ENCODE measurements at regions of chr19 and their contacts with region 1.

Region 1: DNA sequence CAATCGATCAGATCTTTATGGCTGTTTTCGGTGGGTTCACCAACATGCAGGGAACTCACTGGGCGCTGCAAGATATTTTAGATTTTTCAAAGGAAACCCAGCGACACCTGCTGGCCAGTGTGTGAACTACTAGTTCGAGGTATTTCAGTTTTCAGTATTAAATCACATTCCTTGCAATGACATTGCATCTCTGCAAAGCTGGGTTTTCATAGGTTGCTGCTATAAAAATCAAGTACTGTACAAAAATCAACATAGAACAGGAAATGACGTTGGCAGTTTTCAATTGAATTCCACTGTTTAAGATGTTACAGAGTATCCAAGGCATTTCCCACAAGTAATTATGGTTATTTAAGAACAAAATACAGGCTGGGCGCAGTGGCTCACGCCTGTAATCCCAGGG is 17.6 kb downstream of the LIG1 start:
- DNase-seq: no peak
- H3K4me3 ChIP-seq: no peak overlapping the region
- H3K27me3 ChIP-seq: no peaks in the 10 kb centered on the region
- CTCF ChIP-seq: peak; percentile 75

Region 2: DNA sequence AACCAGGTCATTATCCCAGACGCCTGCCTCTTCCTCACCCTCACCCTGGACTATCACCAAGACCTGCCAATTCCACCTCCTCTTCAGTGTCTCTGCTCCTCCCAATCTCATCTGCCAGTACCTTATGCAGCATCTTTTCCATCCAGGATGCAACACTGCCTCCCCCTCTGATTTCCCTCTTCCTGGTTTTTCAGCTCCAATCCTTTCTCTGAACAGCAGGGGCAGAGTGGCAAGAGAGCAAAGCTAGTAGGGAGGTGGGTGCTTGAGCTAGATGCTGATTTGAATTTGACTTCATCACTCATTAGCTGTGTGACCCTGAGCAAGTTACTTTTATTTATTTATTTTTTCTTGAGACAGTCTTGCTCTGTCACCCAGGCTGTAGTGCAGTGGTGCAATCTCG is 83.1 kb before region 1 on chr19:
- CTCF ChIA-PET with region 1: no interaction called
- POLR2A ChIA-PET with region 1: no interaction called
- DNase-seq: no peak
- H3K4me3 ChIP-seq: no peak overlapping the region
- H3K27me3 ChIP-seq: no peaks in the 10 kb centered on the region
- CTCF ChIP-seq: no peak

Region 3: GRCh38 chr19:48102870-48103751 is 49.4 kb before region 1 on chr19:
- CTCF ChIA-PET with region 1: interaction called, 90 read pairs
- POLR2A ChIA-PET with region 1: no interaction called
- DNase-seq: no peak
- H3K4me3 ChIP-seq: no peak overlapping the region
- H3K27me3 ChIP-seq: no peaks in the 10 kb centered on the region
- CTCF ChIP-seq: peak; percentile 80

Region 4: DNA sequence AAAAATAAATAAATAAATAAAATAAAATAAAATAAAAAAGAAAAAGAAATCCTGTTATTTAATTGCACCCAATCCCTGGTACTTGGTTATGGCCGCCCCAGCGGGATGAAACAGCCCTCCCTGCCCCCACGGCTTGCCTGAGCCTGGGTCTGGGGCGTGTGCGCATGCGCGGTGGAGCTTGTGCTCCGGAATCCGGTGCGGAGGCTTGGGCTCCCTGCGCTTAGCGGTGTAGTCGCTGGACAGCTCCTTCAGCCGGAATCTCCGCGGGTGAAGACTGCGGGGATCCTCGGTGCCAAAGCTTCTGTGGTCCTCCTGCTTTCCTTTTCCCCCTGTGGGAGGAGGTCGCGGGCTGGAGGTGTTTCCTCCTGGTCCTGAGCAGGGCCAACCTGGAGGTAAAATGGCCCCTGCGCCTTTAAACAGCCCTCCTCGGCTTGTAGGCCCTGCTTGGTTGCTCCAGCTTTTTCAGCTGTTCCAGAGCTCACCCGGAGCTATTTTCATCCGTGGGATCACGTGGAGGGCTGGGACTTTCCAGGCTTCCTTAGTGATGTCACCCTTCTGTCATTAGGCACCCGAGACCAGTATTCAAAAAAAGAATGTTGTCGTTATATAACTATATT is 42.1 kb before region 1 on chr19 and contains the start of gene PLA2G4C:
- CTCF ChIA-PET with region 1: interaction called, 90 read pairs
- POLR2A ChIA-PET with region 1: no interaction called
- DNase-seq: peak; percentile 71
- H3K4me3 ChIP-seq: peak within 1 kb of the TSS; percentile 48
- H3K27me3 ChIP-seq: no peaks in the 10 kb centered on the region
- CTCF ChIP-seq: no peak
- polyA plus RNA-seq, gene PLA2G4C: 7.2 and 11.3 TPM in 2 replicates

Region 5: DNA sequence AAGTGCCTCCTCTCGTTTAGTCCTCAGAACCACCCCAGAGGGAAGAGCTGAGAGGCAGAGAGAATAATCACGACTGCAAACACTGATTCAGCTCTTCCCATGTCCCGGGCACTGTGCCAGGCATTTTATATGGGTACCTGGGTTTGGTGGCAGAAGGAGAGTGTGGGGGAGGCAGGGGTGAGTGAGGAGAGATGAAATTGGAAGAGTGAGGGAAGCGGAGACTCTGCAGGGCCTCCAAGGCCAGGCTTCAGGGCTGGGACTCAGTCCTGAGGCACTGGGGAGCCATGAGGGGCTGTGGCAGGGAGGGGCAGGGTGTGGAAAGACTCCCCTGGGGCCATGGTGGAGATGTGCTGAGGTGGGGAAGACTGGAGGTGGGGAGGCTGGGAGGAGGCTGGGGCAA is 220.4 kb after region 1 on chr19:
- CTCF ChIA-PET with region 1: no interaction called
- POLR2A ChIA-PET with region 1: no interaction called
- DNase-seq: no peak
- H3K4me3 ChIP-seq: no peak overlapping the region
- H3K27me3 ChIP-seq: 0 out of 2 replicates have a peak, but pooled peaks cover 1% of the 10 kb centered on the region
- CTCF ChIP-seq: no peak

Measured in BJ (cell line).